PC-9 (cell line): ENCODE measurements at regions of chr2 and their contacts with region 1.

Region 1: GRCh38 chr2:74529357-74530238 is at the starts of genes AUP1 and HTRA2:
- DNase-seq: peak; percentile 97 to 98
- H3K4me3 ChIP-seq: peak within 1 kb of the TSS; percentile 93
- H3K27ac ChIP-seq: peak within 1 kb of the TSS; percentile 48
- H3K4me1 ChIP-seq: peaks cover 18% of the 10 kb centered on the region
- H3K27me3 ChIP-seq: no peaks in the 10 kb centered on the region
- CTCF ChIP-seq: no peak
- total RNA-seq, gene AUP1: 79.2 and 84.0 TPM in 2 replicates
- total RNA-seq, gene HTRA2: 23.2 and 23.5 TPM in 2 replicates

Region 2: GRCh38 chr2:74267068-74267467 is 262.5 kb before region 1 on chr2:
- CTCF ChIA-PET with region 1: no interaction called
- POLR2A ChIA-PET with region 1: no interaction called
- intact Hi-C with region 1: loop called (anchors 5 kb)
- DNase-seq: peak; percentile 42 to 79
- H3K4me3 ChIP-seq: no peak overlapping the region
- H3K27ac ChIP-seq: no peak overlapping the region
- H3K4me1 ChIP-seq: peaks cover 12% of the 10 kb centered on the region
- H3K27me3 ChIP-seq: no peaks in the 10 kb centered on the region
- CTCF ChIP-seq: peak; percentile 53; the same call in 1 of the 2 replicates

Region 3: DNA sequence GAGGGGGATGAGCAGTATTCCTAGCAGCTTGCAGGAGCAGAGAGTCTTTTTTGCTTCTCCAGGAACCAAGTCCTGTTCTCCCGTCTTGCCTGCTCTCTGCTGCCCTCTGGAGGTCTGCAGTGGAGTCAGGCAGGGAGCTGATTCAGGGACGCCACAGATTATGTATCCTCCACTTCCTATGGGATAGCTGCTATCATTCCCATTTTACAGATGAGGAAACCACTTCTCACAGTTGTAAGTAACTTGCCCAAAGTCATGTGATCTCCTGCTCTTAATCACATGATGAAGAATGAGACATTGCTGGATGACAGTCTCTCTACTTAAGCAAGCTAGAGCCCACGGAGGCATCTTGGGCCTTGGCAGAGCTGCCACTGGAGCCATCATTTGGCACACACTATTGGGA is 194.7 kb before region 1 on chr2:
- CTCF ChIA-PET with region 1: interaction called, 3 read pairs
- POLR2A ChIA-PET with region 1: no interaction called
- intact Hi-C with region 1: loop called (anchors 5 kb)
- DNase-seq: peak; percentile 59 to 66
- H3K4me3 ChIP-seq: no peak overlapping the region
- H3K27ac ChIP-seq: no peak overlapping the region
- H3K4me1 ChIP-seq: no peaks in the 10 kb centered on the region
- H3K27me3 ChIP-seq: peaks cover 7% of the 10 kb centered on the region; the same call in 1 of the 2 replicates
- CTCF ChIP-seq: peak; percentile 96